Psoas muscle (tissue), 8 donors: ENCODE measurements at regions of chr4 and their contacts with region 1.

Region 1: GRCh38 chr4:140153718-140154571 is at the start of gene MAML3:
- DNase-seq: peak; percentile 96 to 97
- ATAC-seq: peak; percentile 74 to 88 (median 80)
- H3K4me3 ChIP-seq: peak within 1 kb of the TSS; percentile 80
- H3K27ac ChIP-seq: peak within 1 kb of the TSS; percentile 97
- H3K4me1 ChIP-seq: peaks cover 8% of the 10 kb centered on the region
- H3K27me3 ChIP-seq: no peaks in the 10 kb centered on the region
- CTCF ChIP-seq: no peak
- total RNA-seq, gene MAML3: 0.74 to 2.7 (median 1.4) TPM

Region 2: GRCh38 chr4:139734875-139735380 is 419.0 kb before region 1 on chr4:
- intact Hi-C with region 1: loop called (anchors 5 kb)
- DNase-seq: peak; percentile 87 to 93
- ATAC-seq: peak; percentile 93 to 97 (median 94)
- H3K4me3 ChIP-seq: peak overlapping the region; percentile 68
- H3K27ac ChIP-seq: peak overlapping the region; percentile 80
- H3K4me1 ChIP-seq: peaks cover 39% of the 10 kb centered on the region
- H3K27me3 ChIP-seq: no peaks in the 10 kb centered on the region
- CTCF ChIP-seq: peak; percentile 89

Region 3: DNA sequence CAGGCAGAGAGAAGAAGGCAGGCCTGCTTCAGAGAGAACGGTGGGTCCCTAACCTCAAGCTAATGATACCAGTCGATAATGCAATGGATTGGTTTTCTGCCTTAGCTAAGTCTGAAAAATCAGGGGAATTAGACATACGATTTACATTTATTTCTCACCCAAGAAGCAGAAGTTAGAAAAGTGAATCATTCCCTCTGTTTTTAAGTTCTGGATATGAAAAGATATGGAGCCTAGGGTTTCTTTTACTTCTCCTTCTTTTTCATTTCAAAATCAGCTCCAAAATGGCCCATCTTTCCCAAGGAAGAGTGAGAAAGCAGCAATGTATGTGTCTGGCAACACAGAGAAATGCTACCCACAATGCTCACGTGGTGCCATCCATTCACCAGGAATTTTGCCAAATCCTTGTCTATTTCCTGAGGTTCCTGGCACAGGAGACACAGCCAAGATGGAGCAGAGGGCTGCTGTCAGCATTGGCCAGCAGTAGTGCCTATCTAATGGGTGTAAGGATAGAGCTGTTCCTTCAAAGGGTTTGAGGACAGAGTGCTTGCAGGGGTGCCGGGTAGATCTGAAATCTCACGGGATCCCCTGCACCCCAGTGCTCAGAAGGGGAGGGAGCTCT is 231.4 kb before region 1 on chr4:
- intact Hi-C with region 1: loop called in 1 of 2 experiments (anchors 5 kb)
- DNase-seq: no peak
- ATAC-seq: peak in 3 of 4 donors; percentile 27 to 42 (median 29)
- H3K4me3 ChIP-seq: no peak overlapping the region
- H3K27ac ChIP-seq: peak overlapping the region; percentile 73
- H3K4me1 ChIP-seq: peaks cover 46% of the 10 kb centered on the region
- H3K27me3 ChIP-seq: no peaks in the 10 kb centered on the region
- CTCF ChIP-seq: no peak

Region 4: DNA sequence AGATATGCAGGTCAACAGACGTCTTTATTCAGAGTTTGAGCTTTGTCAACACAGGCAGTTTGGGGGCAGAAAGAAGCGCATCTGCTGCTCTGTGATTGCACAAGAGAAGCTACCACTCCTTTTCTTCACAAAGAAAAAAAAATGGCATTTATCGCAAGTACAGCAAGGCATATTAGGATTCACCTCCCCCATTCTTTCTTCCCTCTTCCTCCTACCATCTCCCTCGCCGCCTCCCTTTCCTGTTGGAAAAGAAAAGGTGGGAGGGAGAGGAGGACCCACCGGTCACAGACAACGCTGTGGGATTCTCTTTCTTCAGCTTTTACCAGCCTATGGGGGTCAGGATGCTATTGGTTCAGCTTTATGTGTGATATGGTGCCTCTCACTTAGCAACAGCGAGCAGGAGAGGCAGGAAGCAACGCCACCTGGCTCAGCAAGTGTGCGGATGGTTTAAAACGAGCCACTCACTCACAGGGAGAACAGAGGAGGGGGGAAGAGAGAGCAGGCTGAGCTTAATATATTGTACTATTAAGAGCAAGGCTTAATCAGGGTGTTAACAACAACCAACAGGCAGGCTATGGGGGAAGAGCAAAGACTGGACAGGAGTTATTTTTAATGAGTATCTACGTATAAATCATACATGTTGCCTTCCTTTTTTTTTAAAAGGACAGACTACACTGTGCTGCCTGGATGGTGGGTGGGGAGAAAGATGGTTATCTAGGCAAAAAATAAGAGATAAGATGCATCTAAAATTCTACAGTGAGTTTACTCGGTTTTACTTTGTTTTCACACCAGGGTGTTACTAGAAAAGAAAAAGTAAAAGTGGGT is 104.7 kb before region 1 on chr4:
- intact Hi-C with region 1: loop called (anchors 2 to 5 kb)
- DNase-seq: peak in 1 of 2 donors; percentile 21
- ATAC-seq: peak; percentile 46 to 63 (median 58)
- H3K4me3 ChIP-seq: peak overlapping the region; percentile 54
- H3K27ac ChIP-seq: peak overlapping the region; percentile 75
- H3K4me1 ChIP-seq: peaks cover 47% of the 10 kb centered on the region
- H3K27me3 ChIP-seq: no peaks in the 10 kb centered on the region
- CTCF ChIP-seq: no peak

Region 5: GRCh38 chr4:140237606-140237986 is 83.7 kb after region 1 on chr4:
- intact Hi-C with region 1: loop called in 1 of 2 experiments (anchors 5 kb)
- DNase-seq: peak; percentile 78 to 86
- ATAC-seq: peak; percentile 51 to 64 (median 60)
- H3K4me3 ChIP-seq: peak overlapping the region; percentile 51
- H3K27ac ChIP-seq: peak overlapping the region; percentile 86
- H3K4me1 ChIP-seq: peaks cover 52% of the 10 kb centered on the region
- H3K27me3 ChIP-seq: no peaks in the 10 kb centered on the region
- CTCF ChIP-seq: no peak